BJ (cell line): ENCODE measurements at regions of chr6 and their contacts with region 1.

Region 1: DNA sequence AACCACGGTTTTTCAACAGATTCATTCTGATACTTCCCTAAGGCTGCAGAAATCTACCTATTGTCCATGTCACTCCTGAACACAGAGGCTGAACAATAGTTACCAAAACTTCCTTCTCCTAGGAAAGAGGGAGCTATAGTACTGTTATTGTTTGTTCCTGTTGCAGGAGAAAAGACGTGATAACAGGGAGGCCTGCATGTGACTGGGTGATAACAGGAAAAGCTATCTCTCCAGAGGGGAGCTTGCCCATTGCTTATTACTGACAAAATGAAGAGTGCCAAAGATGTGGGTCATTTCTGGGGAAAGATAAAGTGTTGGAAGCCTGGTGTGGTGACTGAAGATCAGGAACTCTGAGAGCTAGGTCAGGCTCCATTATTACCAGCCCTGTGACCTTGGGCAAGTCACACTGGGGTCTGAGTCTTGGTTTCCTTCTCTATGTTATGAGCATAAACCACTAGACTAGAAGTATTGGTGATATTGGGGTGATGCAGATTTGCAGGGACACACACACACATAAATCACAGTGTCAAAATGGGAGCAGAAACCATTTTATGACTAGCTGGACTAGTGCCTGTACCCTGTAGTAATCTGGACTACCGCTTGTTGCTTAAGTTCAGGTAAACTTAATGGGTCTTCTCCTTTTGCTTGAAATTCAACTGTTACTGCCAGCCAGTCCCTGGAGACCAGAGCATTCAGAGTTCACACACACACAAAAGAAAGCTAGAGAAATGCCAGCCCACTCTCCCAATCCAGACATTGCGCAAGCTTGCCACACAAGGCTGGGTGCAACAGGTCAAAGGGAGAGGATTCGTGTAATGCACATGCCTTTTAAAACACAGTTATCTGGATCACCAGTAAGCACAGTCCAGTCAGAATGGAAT is 136.0 kb upstream of the CNR1 start:
- DNase-seq: no peak
- H3K4me3 ChIP-seq: no peak overlapping the region
- H3K27me3 ChIP-seq: no peaks in the 10 kb centered on the region
- CTCF ChIP-seq: no peak

Region 2: GRCh38 chr6:87870556-87870955 is 431.6 kb before region 1 on chr6:
- CTCF ChIA-PET with region 1: no interaction called
- POLR2A ChIA-PET with region 1: interaction called, 20 read pairs
- DNase-seq: no peak
- H3K4me3 ChIP-seq: no peak overlapping the region
- H3K27me3 ChIP-seq: peaks cover 2% of the 10 kb centered on the region; the same call in 1 of the 2 replicates
- CTCF ChIP-seq: no peak

Region 3: DNA sequence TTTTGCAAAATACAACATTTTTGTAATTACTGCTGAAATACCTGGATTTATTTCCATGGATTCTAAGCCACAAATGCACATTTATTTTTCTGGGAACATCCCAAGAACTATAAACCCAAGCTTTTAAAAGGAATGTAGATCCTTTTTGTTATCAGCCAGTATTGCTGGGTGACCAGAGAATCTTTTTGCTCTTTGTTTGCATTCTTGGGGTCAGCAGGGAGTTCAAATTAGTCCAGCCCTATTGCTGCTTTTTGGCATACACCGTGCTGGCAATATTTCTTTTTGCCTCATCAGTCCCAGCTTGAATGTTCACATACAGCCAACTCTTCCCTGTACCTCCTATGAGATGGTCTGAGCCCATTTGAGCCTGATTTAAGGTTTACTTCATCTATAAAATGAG is 19.2 kb after region 1 on chr6:
- CTCF ChIA-PET with region 1: no interaction called
- POLR2A ChIA-PET with region 1: no interaction called
- DNase-seq: no peak
- H3K4me3 ChIP-seq: no peak overlapping the region
- H3K27me3 ChIP-seq: no peaks in the 10 kb centered on the region
- CTCF ChIP-seq: no peak